Activated CD8-positive, alpha-beta T cell treated with anti-CD3 and anti-CD28 coated beads for 36 hours (primary cell): ENCODE measurements at regions of chr12 and their contacts with region 1.

Region 1: GRCh38 chr12:6688999-6689882 is at the start of gene ZNF384:
- DNase-seq: peak; percentile 97
- ATAC-seq: peak; percentile 83
- H3K4me3 Mint-ChIP-seq: peak within 1 kb of the TSS; percentile 86
- H3K27ac Mint-ChIP-seq: peak within 1 kb of the TSS; percentile 97
- H3K4me1 Mint-ChIP-seq: peaks cover 45% of the 10 kb centered on the region
- H3K27me3 Mint-ChIP-seq: no peaks in the 10 kb centered on the region
- CTCF ChIP-seq: no peak
- total RNA-seq, gene ZNF384: 55.2 to 56.7 TPM

Region 2: DNA sequence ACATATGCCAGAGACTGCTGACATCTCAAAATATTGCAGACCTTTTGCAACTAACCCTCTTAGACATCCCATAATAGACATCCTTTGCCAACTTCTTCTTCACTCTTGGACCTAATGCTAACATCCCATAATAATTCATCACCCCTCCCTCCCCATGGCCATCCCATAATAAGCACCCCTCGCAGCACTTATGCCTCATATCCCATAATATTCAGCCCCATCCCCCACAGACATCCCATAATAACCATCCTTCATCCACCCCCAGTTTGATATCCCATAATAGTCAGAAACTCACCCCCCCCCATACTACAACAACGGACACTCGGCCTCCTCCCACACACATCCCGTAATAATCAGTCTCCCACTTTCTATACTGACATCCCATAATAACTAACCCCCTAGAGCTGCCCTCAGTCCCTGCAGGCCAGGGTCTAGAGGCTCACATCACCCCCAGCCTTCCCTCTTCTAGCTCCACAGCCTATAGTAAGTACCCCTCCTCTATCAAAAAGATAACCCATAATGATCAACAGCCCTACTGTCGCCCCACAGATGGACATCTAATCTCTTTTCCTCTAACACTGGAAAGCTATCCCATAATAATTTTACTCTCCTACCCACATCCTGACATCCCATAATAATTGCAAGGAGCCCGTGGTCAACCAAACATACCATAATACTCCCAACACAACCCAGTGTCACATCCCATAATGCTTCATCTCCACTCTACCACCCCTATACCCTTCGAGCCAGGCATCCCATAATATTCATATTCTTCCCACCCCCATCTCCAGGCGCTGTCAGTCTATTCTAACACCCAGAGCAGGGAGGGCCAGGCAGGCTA is 81.3 kb before region 1 on chr12:
- CTCF ChIA-PET with region 1: interaction called, 21 read pairs
- POLR2A ChIA-PET with region 1: interaction called, 8 read pairs
- intact Hi-C with region 1: no loop called
- DNase-seq: peak; percentile 89
- ATAC-seq: peak; percentile 67
- H3K4me3 Mint-ChIP-seq: no peak overlapping the region
- H3K27ac Mint-ChIP-seq: no peak overlapping the region
- H3K4me1 Mint-ChIP-seq: peaks cover 54% of the 10 kb centered on the region
- H3K27me3 Mint-ChIP-seq: no peaks in the 10 kb centered on the region
- CTCF ChIP-seq: no peak

Region 3: DNA sequence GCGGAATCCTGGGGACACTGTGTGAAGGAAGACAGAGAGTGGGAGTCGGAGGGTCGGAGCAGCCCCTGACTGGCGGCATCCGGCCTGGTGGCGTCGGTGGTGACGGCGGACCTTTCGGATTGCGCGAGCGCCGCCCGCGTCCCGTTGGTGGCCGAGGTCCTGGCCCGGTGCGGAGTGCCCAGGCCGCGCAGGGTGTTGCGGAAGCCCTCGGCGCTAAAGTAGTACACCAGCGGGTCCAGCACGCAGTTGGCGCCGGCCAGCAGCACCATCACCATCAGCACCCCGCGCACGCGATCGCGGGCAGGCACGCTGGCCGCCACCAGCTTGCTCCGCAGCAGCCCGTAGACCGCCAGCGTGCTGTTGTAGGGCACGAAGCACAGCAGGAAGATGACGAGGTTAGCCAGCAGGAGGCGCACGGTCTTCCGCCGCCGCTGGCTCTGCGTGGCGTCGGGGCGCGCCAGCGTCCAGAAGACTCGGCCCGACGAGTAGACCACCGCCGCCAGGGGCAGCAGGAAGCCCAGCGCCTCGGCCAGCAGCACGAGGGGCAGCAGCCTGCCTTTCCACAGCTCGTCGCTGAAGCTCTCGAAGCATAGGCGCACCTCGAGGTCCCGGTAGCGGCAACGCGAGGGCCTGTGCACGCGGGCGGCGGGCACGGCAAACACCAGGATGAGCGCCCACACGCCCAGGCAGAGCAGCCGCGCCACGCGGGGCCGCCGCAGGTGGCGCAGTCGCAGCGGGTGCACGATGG is 68.9 kb before region 1 on chr12:
- CTCF ChIA-PET with region 1: interaction called, 35 read pairs
- POLR2A ChIA-PET with region 1: interaction called, 6 read pairs
- intact Hi-C with region 1: loop called (anchors 2 kb)
- DNase-seq: peak; percentile 65
- ATAC-seq: peak; percentile 78
- H3K4me3 Mint-ChIP-seq: peak overlapping the region; percentile 72
- H3K27ac Mint-ChIP-seq: peak overlapping the region; percentile 69
- H3K4me1 Mint-ChIP-seq: peaks cover 8% of the 10 kb centered on the region
- H3K27me3 Mint-ChIP-seq: no peaks in the 10 kb centered on the region
- CTCF ChIP-seq: peak; percentile 77

Region 4: DNA sequence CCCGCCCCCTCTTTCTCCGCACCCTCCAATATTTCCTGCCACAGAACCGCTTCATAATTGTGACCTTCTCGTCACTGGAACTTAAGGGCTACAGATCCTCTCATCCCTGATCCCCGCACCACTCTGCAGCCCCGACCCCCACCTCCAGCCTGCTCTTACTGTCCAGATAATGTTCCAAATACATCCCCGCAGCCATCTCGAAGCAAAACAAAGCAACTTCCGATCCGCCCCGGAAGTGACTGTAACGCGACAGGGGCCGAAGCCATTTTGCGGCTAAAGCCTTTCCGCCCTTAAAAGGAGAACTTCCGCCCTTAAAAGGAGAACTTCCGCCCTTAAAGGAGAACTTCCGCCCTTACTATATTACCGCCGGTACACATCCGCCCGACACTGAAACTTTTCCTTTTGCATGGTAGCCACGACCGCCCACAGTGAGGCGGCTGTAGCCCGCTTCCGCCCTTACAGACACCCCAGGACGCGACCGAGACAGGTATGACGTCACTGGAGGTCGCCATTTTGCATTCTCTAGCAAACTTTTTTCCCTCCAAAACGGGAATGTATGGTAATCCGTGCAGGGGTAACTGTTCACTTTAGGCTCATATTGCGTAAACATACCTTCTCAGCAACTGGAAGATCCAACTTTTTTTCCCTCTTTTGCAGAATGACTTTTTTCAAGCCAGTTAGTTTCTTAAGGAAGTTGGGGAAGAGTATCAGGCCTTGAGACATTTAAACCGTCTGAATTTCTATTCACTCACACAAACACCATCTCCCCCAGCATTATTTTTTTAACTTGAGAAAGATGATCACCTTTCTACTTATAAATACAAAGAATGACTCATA is 26.1 kb before region 1 on chr12 and contains the start of gene ING4:
- CTCF ChIA-PET with region 1: interaction called, 27 read pairs
- POLR2A ChIA-PET with region 1: interaction called, 17 read pairs
- intact Hi-C with region 1: loop called (anchors 1 kb)
- DNase-seq: peak; percentile 99
- ATAC-seq: peak; percentile 97
- H3K4me3 Mint-ChIP-seq: peak within 1 kb of the TSS; percentile 90
- H3K27ac Mint-ChIP-seq: peak within 1 kb of the TSS; percentile 94
- H3K4me1 Mint-ChIP-seq: peaks cover 23% of the 10 kb centered on the region
- H3K27me3 Mint-ChIP-seq: no peaks in the 10 kb centered on the region
- CTCF ChIP-seq: no peak
- total RNA-seq, gene ING4: 16.6 to 16.7 TPM

Region 5: GRCh38 chr12:6723607-6724396 is 34.6 kb after region 1 on chr12 and contains the start of gene COPS7A:
- CTCF ChIA-PET with region 1: interaction called, 33 read pairs
- POLR2A ChIA-PET with region 1: interaction called, 22 read pairs
- intact Hi-C with region 1: no loop called
- DNase-seq: peak; percentile 100
- ATAC-seq: peak; percentile 94
- H3K4me3 Mint-ChIP-seq: peak within 1 kb of the TSS; percentile 85
- H3K27ac Mint-ChIP-seq: peak within 1 kb of the TSS; percentile 97
- H3K4me1 Mint-ChIP-seq: peaks cover 24% of the 10 kb centered on the region
- H3K27me3 Mint-ChIP-seq: no peaks in the 10 kb centered on the region
- CTCF ChIP-seq: no peak
- total RNA-seq, gene COPS7A: 35.9 to 38.8 TPM